A549 (cell line): ENCODE measurements at regions of chr16 and their contacts with region 1.

Region 1: GRCh38 chr16:1152651-1153259 is at the start of gene CACNA1H:
- DNase-seq: peak in 1 of 2 experiments; percentile 58
- ATAC-seq: peak in 1 of 2 experiments; percentile 17; a peak in 1 of 6 replicates
- H3K4me3 ChIP-seq: peak within 1 kb of the TSS; percentile 53
- H3K27ac ChIP-seq: peak within 1 kb of the TSS; percentile 87 to 96
- H3K4me1 ChIP-seq: peaks cover 36% of the 10 kb centered on the region
- CTCF ChIP-seq: peak; percentile 74
- EP300 ChIP-seq: no peak
- POLR2A ChIP-seq: peak; percentile 22; the same call in 1 of the 2 replicates
- RAD21 ChIP-seq: 0 out of 5 replicates have a peak, but pooled peaks of 1 of the 2 experiments have one; percentile 19
- polyA plus RNA-seq, gene CACNA1H: 7.2 and 8.6 TPM in 2 replicates

Region 2: GRCh38 chr16:450385-451134 is 702.2 kb before region 1 on chr16:
- CTCF ChIA-PET with region 1: no interaction called
- POLR2A ChIA-PET with region 1: no interaction called
- DNase-seq: no peak
- ATAC-seq: peak; percentile 39 to 43; a peak in 4 of 6 replicates
- H3K4me3 ChIP-seq: no peak overlapping the region
- H3K27ac ChIP-seq: 0 out of 6 replicates have a peak overlapping the region, but pooled peaks of 1 of the 2 experiments have one; percentile 41
- H3K4me1 ChIP-seq: peaks cover 27% of the 10 kb centered on the region
- CTCF ChIP-seq: no peak
- EP300 ChIP-seq: no peak
- POLR2A ChIP-seq: no peak
- RAD21 ChIP-seq: no peak

Region 3: DNA sequence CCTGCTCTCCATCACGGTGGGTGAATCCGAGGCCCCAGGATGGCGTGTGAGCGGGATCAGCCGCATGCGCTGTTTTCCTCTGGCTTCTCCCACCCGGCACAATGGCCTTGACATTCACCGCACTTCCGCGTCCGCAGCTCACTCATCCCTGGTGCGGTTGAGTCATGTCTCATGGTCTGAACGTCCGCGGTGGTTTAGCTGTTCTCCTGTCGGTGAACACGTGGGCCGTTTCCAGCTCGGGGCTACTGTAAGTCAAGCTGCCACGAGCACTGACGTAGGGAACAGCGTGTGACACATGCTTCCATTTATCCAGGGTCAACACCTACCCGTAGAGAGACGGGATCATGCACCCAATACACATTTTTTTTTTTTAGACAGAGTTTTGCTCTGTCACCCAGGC is 15.2 kb before region 1 on chr16:
- CTCF ChIA-PET with region 1: interaction called, 21 read pairs
- POLR2A ChIA-PET with region 1: no interaction called
- DNase-seq: no peak
- ATAC-seq: no peak
- H3K4me3 ChIP-seq: no peak overlapping the region
- H3K27ac ChIP-seq: no peak overlapping the region
- H3K4me1 ChIP-seq: peaks cover 12% of the 10 kb centered on the region
- CTCF ChIP-seq: no peak
- EP300 ChIP-seq: no peak
- POLR2A ChIP-seq: no peak
- RAD21 ChIP-seq: no peak